Prostate gland (tissue), 2 donors: ENCODE measurements at regions of chr7 and their contacts with region 1.

Region 1: GRCh38 chr7:107150375-107151073 is 18.3 kb upstream of the HBP1 start:
- DNase-seq: peak; percentile 60
- H3K4me3 ChIP-seq: no peak overlapping the region
- H3K27ac ChIP-seq: no peak overlapping the region
- H3K4me1 ChIP-seq: no peaks in the 10 kb centered on the region
- H3K27me3 ChIP-seq: no peaks in the 10 kb centered on the region
- CTCF ChIP-seq: peak; percentile 36 to 78 (median 70)
- POLR2A ChIP-seq: no peak

Region 2: DNA sequence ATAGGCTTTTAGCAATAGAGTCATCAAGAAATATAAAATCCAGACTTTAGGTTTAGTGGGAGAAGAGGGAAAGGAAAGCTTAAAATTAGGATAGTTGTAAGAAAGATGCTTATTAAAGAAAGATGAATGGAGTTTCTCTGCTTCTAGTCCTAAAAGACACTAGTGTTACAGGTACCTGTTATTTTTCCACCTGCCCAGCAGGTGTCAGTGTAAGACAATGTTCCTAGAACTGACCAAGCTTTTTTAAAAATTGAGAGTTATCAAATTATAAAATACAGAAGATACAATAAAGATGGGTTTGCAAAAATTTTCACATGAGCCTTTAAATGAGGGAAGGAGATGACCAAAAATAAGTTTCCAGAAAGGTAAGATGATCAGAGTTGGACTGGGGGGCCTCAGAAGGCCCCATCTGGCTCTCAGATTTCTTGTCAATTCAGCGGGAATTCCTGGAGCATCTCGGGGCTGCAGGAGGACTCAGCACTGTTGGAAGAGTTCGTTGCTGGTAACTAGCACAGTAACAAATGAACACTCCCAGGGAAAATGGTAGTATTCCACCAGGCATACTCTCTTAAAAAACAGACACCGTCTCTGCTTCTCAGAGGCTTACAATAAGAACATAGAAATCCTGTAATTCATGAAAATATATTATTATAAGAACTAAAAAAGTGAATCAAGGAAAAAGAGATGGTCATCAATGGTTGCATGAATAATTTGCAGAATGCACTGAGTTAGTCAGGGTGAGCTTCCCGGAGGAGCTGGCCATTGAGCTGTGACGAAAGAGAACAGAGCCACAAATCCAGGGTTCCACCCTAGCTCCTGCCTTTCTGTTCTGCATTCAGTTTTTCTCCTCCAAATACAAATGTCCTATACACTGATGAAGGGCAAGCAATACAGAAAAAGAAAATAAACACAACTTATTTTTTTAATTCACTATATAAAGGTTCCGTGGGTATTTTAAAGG is 357.2 kb before region 1 on chr7:
- intact Hi-C with region 1: loop called (anchors 5 kb)
- DNase-seq: no peak
- H3K4me3 ChIP-seq: no peak overlapping the region
- H3K27ac ChIP-seq: no peak overlapping the region
- H3K4me1 ChIP-seq: no peaks in the 10 kb centered on the region
- H3K27me3 ChIP-seq: no peaks in the 10 kb centered on the region
- CTCF ChIP-seq: peak in 3 of 4 experiments; percentile 37 to 70 (median 57)
- POLR2A ChIP-seq: no peak

Region 3: GRCh38 chr7:106947244-106947728 is 203.2 kb before region 1 on chr7:
- intact Hi-C with region 1: loop called (anchors 2 kb)
- DNase-seq: peak; percentile 19
- H3K4me3 ChIP-seq: no peak overlapping the region
- H3K27ac ChIP-seq: no peak overlapping the region
- H3K4me1 ChIP-seq: no peaks in the 10 kb centered on the region
- H3K27me3 ChIP-seq: no peaks in the 10 kb centered on the region
- CTCF ChIP-seq: peak in 3 of 4 experiments; percentile 47 to 67 (median 49)
- POLR2A ChIP-seq: no peak